Right ventricle myocardium superior (tissue), 1 donor: ENCODE measurements at regions of chr10 and their contacts with region 1.

Region 1: DNA sequence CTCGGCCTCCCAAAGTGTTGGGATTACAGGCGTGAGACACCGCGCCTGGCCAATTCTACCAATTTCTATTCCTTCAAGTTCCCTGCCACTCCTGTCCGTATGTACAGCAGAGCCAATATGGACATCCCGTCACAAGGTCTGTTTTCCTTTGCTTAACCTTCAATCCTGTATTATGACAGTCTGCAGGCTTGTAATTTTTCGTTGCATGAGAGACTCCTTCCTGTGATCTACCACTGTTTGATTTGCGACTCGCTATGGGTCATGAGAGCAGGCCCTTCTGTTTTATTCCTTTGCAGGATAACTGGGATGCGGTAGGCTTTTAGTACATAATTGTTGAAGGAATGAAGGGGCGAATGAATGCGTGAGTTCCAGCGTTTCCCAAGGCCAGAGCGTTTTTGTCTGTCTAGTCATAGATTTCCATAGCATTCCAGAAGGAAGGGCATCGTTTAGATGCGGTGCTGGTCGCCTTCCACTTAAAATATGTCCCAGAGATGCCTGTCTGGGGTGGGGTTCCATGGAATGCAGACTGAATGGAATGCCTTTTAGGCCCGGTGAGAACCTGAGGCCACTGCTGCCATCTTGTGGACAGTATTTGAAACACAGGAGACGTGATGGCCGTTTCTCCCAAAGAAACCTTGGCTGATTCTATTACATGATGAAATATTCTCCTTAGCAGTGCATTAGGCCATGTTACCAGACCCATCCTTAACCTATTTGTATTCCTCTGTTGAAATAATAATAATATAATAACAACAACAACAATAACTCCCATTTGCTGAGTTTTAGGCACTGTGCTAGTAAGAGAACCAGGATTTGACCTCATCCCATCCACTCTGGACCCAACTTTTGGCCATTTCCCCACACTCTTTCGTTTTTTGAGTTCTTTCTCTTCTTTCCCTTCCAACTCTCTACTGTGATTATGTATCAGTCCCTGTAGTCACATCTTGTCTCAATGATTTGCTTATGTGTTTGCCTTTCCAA is 193.2 kb downstream of the MYOF start:
- DNase-seq: peak; percentile 64
- ATAC-seq: peak; percentile 72

Region 2: DNA sequence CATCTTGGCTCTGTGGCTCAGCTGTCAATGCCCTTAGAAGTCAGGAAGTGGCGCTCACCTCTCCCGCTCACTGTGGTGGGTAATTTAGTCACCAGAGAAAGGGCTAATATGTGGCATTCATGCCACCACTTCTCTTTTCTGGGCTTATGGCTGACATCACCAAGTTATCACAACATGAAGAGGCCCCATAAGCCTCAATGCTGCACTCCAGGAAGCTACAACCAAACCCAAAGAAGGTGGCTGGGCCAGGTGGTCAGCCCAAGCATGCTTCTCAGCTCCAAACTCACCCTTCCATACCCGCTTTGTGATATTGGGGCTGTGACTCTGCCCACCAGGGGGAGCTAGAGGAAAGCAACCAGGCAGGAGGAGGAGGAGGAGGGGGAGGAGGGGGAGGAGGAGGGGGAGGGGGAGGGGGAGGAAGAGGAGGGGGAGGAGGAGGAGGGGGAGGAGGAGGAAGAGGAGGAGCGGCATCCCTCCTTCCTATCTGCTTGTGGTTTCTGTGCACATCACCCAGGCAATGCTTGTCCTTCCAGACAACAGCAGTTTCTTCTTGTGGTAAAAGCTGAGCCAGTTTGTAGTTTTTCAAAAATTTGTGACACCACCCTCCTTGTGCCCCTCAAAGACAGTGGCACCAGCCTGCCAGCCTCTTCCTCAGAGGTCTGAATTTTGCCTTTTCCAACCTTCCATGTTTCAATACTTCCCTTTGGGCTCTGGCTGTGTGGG is 173.1 kb before region 1 on chr10:
- intact Hi-C with region 1: loop called (anchors 10 kb)
- DNase-seq: peak; percentile 61
- ATAC-seq: peak; percentile 71

Region 3: GRCh38 chr10:93245779-93246178 is 43.2 kb before region 1 on chr10:
- intact Hi-C with region 1: no loop called
- DNase-seq: no peak
- ATAC-seq: no peak